GM12878 (cell line): ENCODE measurements at regions of chr4 and their contacts with region 1.

Region 1: DNA sequence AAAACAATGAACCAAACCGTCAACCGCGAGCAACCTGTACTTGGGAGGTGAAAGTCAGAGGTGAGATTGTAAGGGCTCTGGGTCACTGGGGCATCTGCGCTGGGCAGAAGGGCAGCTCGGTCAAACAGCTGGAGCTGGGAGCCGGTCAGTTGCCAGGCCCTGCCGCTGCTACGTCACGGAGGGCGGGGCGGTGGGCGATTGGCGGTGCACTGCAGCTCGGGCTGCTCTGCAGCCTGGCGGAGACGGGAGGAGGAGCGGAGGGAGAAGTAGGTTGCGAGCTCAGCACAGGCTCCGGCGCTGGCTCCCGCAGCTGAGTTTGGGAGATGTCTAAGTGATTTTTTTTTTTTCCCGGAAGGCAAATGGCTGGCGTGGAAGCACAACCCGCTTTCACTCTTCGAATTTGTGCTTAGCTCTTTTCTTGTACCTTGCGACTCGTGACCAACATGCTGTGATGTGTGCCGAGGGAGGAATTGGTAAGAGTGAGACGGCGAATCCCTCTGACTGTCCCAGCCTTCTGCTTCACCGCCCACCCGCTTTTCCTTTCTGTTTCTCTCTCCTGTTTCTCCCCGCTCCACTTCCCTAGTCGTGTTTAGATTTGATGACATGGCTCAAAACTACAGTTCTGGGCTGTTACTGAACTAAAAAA is at the start of gene ATP10D:
- DNase-seq: peak; percentile 71
- ATAC-seq: peak; percentile 91
- H3K4me3 ChIP-seq: peak within 1 kb of the TSS; percentile 81
- H3K27ac ChIP-seq: peak within 1 kb of the TSS; percentile 70
- H3K4me1 ChIP-seq: peaks cover 17% of the 10 kb centered on the region
- H3K27me3 ChIP-seq: no peaks in the 10 kb centered on the region
- CTCF ChIP-seq: no peak; a peak in 1 of 6 replicates
- EP300 ChIP-seq: peak in 1 of 2 experiments; percentile 42; a peak in 1 of 4 replicates
- POLR2A ChIP-seq: peak; percentile 91
- RAD21 ChIP-seq: peak; percentile 34; the same call in 1 of the 2 replicates
- polyA plus RNA-seq, gene ATP10D: 10.2 to 18.0 TPM

Region 2: DNA sequence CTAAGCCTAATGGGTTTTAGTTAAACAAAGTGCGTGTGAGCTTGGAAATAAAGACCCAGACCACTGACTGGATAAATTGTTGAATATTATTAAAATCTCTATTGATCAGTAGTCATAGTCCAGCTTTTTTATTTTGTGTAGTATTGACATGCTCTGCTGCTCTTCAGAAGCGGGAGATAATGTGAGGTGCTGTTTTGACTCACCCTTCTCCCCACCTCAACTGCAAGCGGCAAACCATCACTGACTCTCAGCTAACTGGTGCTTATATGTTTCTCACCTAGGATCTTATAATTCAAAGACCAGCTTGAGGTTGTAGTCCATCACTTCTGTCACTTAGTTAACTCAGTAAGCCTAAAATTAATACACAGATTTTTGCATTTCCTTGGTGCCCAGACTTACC is 93.9 kb before region 1 on chr4:
- CTCF ChIA-PET with region 1: interaction called, 9 read pairs
- POLR2A ChIA-PET with region 1: interaction called, 5 read pairs
- RAD21 ChIA-PET with region 1: interaction called, 12 read pairs
- SMC1A ChIA-PET with region 1: interaction called, 9 read pairs
- in situ Hi-C with region 1: no loop called
- intact Hi-C with region 1: loop called (anchors 5 kb)
- DNase-seq: no peak
- ATAC-seq: peak; percentile 92
- H3K4me3 ChIP-seq: no peak overlapping the region
- H3K27ac ChIP-seq: no peak overlapping the region
- H3K4me1 ChIP-seq: no peaks in the 10 kb centered on the region
- H3K27me3 ChIP-seq: no peaks in the 10 kb centered on the region; a peak in 1 of 4 replicates
- CTCF ChIP-seq: no peak
- EP300 ChIP-seq: no peak
- POLR2A ChIP-seq: no peak
- RAD21 ChIP-seq: no peak

Region 3: GRCh38 chr4:47468691-47469365 is 16.3 kb before region 1 on chr4:
- CTCF ChIA-PET with region 1: interaction called, 79 read pairs
- POLR2A ChIA-PET with region 1: interaction called, 36 read pairs
- RAD21 ChIA-PET with region 1: interaction called, 84 read pairs
- SMC1A ChIA-PET with region 1: interaction called, 126 read pairs
- in situ Hi-C with region 1: no loop called
- intact Hi-C with region 1: no loop called
- DNase-seq: no peak
- ATAC-seq: no peak
- H3K4me3 ChIP-seq: no peak overlapping the region
- H3K27ac ChIP-seq: no peak overlapping the region
- H3K4me1 ChIP-seq: peaks cover 17% of the 10 kb centered on the region
- H3K27me3 ChIP-seq: no peaks in the 10 kb centered on the region
- CTCF ChIP-seq: no peak
- EP300 ChIP-seq: no peak
- POLR2A ChIP-seq: no peak
- RAD21 ChIP-seq: no peak

Region 4: GRCh38 chr4:47510506-47511143 is 25.5 kb after region 1 on chr4:
- CTCF ChIA-PET with region 1: interaction called, 24 read pairs
- POLR2A ChIA-PET with region 1: interaction called, 9 read pairs
- RAD21 ChIA-PET with region 1: interaction called, 31 read pairs
- SMC1A ChIA-PET with region 1: interaction called, 34 read pairs
- in situ Hi-C with region 1: no loop called
- intact Hi-C with region 1: no loop called
- DNase-seq: peak; percentile 90
- ATAC-seq: peak; percentile 94
- H3K4me3 ChIP-seq: peak overlapping the region; percentile 35; the same call in 1 of the 2 replicates
- H3K27ac ChIP-seq: peak overlapping the region; percentile 84
- H3K4me1 ChIP-seq: peaks cover 12% of the 10 kb centered on the region
- H3K27me3 ChIP-seq: no peaks in the 10 kb centered on the region
- CTCF ChIP-seq: peak in 2 of 3 experiments; percentile 2 to 42; a peak in 2 of 6 replicates
- EP300 ChIP-seq: peak; percentile 95 to 96
- POLR2A ChIP-seq: no peak
- RAD21 ChIP-seq: 0 out of 2 replicates have a peak, but pooled peaks have one; percentile 22

Region 5: DNA sequence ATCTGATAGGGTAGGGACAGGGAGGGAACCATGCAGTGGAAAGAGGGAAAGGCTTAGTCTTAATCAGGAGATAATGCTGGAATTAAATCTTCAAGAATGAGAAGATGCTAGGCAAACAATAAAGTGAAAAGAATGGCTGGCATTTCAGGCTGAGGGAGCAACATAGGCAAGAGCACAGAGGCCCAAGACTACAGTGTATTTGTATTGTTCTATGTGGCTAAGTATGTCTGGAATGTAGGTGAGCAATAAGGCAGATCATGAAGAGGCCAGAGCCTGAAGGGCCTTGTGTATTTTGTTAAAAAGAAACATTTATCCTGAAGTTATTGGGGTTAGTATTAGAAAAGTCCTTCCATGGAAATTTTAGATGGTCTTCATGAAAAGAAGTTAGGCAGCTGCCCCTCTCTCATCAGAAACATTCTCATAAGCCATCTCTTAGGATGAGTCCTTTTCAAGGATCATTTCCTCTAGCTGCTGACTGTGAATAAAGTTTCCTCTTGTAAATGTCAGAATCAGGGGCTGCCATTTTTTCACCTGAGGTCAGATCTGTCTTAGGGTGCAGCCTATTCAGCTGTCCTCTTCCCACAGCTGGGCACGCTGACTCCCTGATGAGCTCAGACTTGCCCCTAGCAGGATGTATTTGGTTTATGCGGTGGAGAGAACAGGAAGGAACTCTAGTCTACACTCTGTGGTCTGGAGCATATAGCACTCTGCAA is 46.2 kb after region 1 on chr4:
- CTCF ChIA-PET with region 1: interaction called, 8 read pairs
- POLR2A ChIA-PET with region 1: interaction called, 4 read pairs
- RAD21 ChIA-PET with region 1: interaction called, 20 read pairs
- SMC1A ChIA-PET with region 1: interaction called, 19 read pairs
- in situ Hi-C with region 1: no loop called
- intact Hi-C with region 1: no loop called
- DNase-seq: peak; percentile 86
- ATAC-seq: peak; percentile 95
- H3K4me3 ChIP-seq: no peak overlapping the region
- H3K27ac ChIP-seq: peak overlapping the region; percentile 43
- H3K4me1 ChIP-seq: peaks cover 13% of the 10 kb centered on the region
- H3K27me3 ChIP-seq: no peaks in the 10 kb centered on the region
- CTCF ChIP-seq: no peak
- EP300 ChIP-seq: peak; percentile 51 to 54; a peak in 2 of 4 replicates
- POLR2A ChIP-seq: no peak
- RAD21 ChIP-seq: no peak